ENCODE measurements at regions of chr2 and their contacts with region 1.

Region 1: GRCh38 chr2:174465327-174465726 is 21.5 kb downstream of the GPR155 start:
- DNase-seq: no peak
- H3K4me3 ChIP-seq: no peak overlapping the region
- CTCF ChIP-seq: no peak

Region 2: GRCh38 chr2:174282441-174282840 is 182.9 kb before region 1 on chr2:
- CTCF ChIA-PET with region 1: no interaction called
- POLR2A ChIA-PET with region 1: no interaction called
- DNase-seq: no peak
- H3K4me3 ChIP-seq: no peak overlapping the region
- CTCF ChIP-seq: no peak

Region 3: DNA sequence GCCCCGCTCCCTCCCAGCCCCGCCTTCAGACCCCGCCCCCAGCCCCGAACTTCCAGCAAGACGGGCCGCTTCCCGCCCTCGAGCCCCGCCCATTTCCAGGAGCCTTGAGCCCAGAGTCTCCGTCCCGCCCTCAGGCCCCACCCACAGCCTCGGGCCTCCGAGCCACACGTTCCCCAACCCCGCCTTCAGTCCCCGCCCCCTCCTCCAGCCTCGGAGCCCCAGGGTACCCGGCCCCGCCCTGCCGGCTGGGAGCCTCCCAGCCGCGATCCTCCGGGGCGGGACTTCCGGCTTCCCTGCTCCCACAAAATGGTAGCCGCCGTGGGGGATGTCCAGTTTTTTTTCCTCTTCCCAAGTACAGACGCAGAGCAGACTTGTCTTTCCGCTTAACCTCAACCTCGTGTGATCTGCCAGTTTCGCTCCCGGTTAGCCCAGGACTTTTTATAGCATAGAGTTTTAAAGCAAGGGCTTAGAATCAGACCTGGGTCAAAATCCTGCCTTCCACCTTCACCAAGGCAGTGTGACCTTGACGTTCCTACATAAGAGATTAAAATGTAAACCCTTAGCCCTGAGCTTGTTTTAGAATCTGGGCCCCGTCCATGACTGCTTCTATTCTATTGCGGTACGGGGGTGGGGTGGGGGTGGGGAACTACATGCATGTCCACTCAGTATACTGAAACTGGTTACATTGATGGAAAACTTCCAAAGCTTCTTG is 21.9 kb after region 1 on chr2:
- CTCF ChIA-PET with region 1: interaction called, 58 read pairs
- POLR2A ChIA-PET with region 1: no interaction called
- DNase-seq: peak; percentile 86
- H3K4me3 ChIP-seq: peak overlapping the region; percentile 95
- CTCF ChIP-seq: no peak

Region 4: GRCh38 chr2:174536304-174536703 is 71.0 kb after region 1 on chr2:
- CTCF ChIA-PET with region 1: interaction called, 11 read pairs
- POLR2A ChIA-PET with region 1: no interaction called
- DNase-seq: no peak
- H3K4me3 ChIP-seq: no peak overlapping the region
- CTCF ChIP-seq: no peak

Region 5: GRCh38 chr2:174554529-174555150 is 89.3 kb after region 1 on chr2:
- CTCF ChIA-PET with region 1: interaction called, 214 read pairs
- POLR2A ChIA-PET with region 1: no interaction called
- DNase-seq: no peak
- H3K4me3 ChIP-seq: no peak overlapping the region
- CTCF ChIP-seq: no peak

Region 6: GRCh38 chr2:174577967-174578589 is 112.8 kb after region 1 on chr2:
- CTCF ChIA-PET with region 1: interaction called, 15 read pairs
- POLR2A ChIA-PET with region 1: no interaction called
- DNase-seq: no peak
- H3K4me3 ChIP-seq: no peak overlapping the region
- CTCF ChIP-seq: peak; percentile 66

Region 7: DNA sequence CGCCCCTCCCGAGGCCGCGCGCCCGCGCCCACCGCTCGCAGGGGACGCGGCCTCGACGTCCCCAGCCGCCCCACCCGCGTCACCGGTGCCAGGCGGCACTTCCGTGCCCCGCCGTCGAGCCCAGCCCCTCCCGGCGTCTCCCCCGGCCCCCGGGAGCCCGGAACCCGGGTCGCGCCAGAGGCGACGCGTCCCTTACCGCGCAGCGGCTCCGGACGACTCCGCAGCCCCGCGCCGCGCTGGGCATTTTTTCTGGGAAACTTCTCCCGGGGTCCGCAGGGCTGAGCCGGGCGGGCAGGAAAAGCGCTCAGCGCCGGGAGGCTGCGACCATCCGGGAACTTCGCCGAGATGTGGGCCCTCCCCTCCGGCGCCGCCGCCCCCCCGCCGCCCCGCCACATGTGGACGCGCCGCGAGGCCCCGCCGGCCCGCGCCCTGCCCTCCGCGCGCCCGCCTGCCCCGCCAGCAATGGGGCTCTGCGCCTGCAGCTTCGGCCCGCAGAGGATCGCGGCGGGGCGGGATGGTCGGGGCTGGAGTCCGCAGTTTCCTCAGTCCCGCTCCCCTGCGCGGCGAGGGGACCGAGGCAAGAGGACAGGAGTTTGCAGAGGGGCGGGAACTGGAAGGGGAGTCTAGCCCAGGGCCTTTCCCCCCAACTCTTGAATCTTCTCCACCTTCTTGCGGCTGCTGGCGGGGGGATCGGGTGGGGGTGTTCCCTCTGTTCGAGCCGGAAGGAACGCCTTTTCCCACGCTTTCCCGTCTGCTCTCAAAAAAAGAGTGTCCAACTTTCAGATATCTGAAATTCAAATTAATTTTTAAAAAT is 217.5 kb after region 1 on chr2:
- CTCF ChIA-PET with region 1: interaction called, 96 read pairs
- POLR2A ChIA-PET with region 1: no interaction called
- DNase-seq: no peak
- H3K4me3 ChIP-seq: peak overlapping the region; percentile 80
- CTCF ChIP-seq: no peak